Activated CD4-positive, alpha-beta memory T cell treated with anti-CD3 and anti-CD28 coated beads, Interleukin-2, amount 10 ng/mL, durations not matched to agents 7 days and 5 days (primary cell): ENCODE measurements at regions of chr3 and their contacts with region 1.

Region 1: DNA sequence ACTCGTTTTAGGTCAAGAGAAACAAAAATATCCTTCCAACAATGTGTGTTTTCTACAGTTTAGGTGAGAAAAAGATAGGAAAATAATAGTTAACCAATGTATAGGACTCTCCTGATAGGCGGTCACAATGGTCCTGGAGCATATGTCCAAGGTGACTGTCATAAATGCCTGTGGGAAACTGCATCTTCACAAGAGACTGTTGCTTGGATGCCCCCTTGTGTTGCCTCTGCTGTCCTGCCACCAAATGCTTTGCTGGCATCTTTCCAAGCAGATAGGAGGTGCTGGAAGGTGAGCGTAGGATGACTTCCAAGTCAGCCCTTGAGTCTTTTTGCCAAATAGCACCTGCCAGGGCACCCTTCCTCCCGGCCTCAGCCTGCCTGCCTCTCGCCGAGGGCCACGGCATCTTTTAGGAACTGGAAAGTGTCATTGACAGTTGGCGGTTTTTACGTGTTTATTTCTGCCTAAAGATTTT is 24.1 kb upstream of the SACM1L start:
- DNase-seq: peak; percentile 66
- H3K4me3 Mint-ChIP-seq: peak overlapping the region; percentile 77
- H3K27ac Mint-ChIP-seq: peak overlapping the region; percentile 79
- H3K4me1 Mint-ChIP-seq: peaks cover 54% of the 10 kb centered on the region
- H3K27me3 Mint-ChIP-seq: no peaks in the 10 kb centered on the region

Region 2: DNA sequence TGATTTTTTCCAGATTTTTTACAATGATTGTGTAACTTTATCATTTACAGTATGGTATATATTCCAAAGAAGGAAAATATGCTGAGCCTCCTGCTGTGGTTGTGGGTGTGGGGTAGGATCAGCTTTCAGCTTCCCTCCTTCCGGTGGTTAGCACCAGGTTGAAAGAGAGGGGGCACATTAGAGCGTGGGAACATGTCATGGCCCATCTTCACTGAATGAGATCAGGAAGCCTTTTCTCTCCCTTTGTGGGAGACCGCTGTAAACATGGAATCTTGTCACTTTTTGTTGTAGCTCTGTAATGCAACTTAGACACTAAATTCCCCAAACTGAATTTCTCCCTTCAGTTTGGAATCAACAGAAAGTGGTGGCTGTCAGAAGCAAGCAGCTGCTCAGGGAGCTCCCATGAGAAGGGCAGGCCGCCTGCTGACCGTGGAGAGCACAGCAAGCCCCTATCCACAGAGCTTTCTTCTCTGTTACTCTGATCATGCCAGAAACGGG is 157.3 kb before region 1 on chr3:
- CTCF ChIA-PET with region 1: interaction called, 25 read pairs
- POLR2A ChIA-PET with region 1: no interaction called
- DNase-seq: no peak
- H3K4me3 Mint-ChIP-seq: no peak overlapping the region
- H3K27ac Mint-ChIP-seq: no peak overlapping the region
- H3K4me1 Mint-ChIP-seq: no peaks in the 10 kb centered on the region
- H3K27me3 Mint-ChIP-seq: no peaks in the 10 kb centered on the region